CD4-positive, alpha-beta T cell (primary cell): ENCODE measurements at regions of chr12 and their contacts with region 1.

Region 1: GRCh38 chr12:50132505-50133135 is 20.6 kb downstream of the COX14 start:
- DNase-seq: peak in 3 of 14 experiments; percentile 61 to 70 (median 63)
- ATAC-seq: peak; percentile 65
- H3K4me3 ChIP-seq: no peak overlapping the region
- H3K4me3 Mint-ChIP-seq: no peak overlapping the region
- H3K27ac ChIP-seq: no peak overlapping the region
- H3K27ac Mint-ChIP-seq: peak overlapping the region; percentile 16
- H3K4me1 ChIP-seq: no peaks in the 10 kb centered on the region
- H3K4me1 Mint-ChIP-seq: peaks cover 16% of the 10 kb centered on the region
- H3K27me3 ChIP-seq: no peaks in the 10 kb centered on the region
- H3K27me3 Mint-ChIP-seq: no peaks in the 10 kb centered on the region
- CTCF ChIP-seq: peak; percentile 82

Region 2: DNA sequence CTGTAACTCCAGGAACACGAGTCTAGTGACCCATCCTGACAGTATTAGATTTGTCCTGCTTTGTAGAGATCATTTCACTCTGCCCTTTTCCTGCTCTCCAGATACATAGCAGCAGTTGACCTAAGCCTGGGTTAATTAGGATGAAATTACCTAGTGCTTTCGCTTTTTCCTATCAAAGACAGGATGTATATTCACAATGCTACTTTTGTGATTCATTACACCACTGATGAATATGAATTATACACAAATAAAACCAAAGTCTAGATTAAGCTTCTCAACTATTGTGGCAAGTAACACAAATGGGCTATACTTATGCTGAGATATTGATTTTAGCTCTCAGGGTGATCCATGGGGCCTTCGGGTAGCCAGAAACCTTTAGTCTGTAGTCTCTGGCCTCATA is 16.7 kb after region 1 on chr12:
- CTCF ChIA-PET with region 1: interaction called, 12 read pairs
- POLR2A ChIA-PET with region 1: interaction called, 3 read pairs
- intact Hi-C with region 1: no loop called
- DNase-seq: no peak
- ATAC-seq: no peak
- H3K4me3 ChIP-seq: no peak overlapping the region
- H3K4me3 Mint-ChIP-seq: no peak overlapping the region
- H3K27ac ChIP-seq: no peak overlapping the region
- H3K27ac Mint-ChIP-seq: peak overlapping the region; percentile 63
- H3K4me1 ChIP-seq: no peaks in the 10 kb centered on the region
- H3K4me1 Mint-ChIP-seq: peaks cover 31% of the 10 kb centered on the region
- H3K27me3 ChIP-seq: no peaks in the 10 kb centered on the region
- H3K27me3 Mint-ChIP-seq: no peaks in the 10 kb centered on the region
- CTCF ChIP-seq: no peak

Region 3: GRCh38 chr12:50174971-50175715 is 42.5 kb after region 1 on chr12:
- CTCF ChIA-PET with region 1: interaction called, 21 read pairs
- POLR2A ChIA-PET with region 1: interaction called, 5 read pairs
- intact Hi-C with region 1: loop called (anchors 1 kb)
- DNase-seq: peak in 5 of 14 experiments; percentile 8 to 81 (median 69)
- ATAC-seq: peak; percentile 57
- H3K4me3 ChIP-seq: no peak overlapping the region
- H3K4me3 Mint-ChIP-seq: no peak overlapping the region
- H3K27ac ChIP-seq: no peak overlapping the region
- H3K27ac Mint-ChIP-seq: no peak overlapping the region
- H3K4me1 ChIP-seq: no peaks in the 10 kb centered on the region
- H3K4me1 Mint-ChIP-seq: no peaks in the 10 kb centered on the region
- H3K27me3 ChIP-seq: no peaks in the 10 kb centered on the region
- H3K27me3 Mint-ChIP-seq: no peaks in the 10 kb centered on the region
- CTCF ChIP-seq: peak; percentile 90

Region 4: DNA sequence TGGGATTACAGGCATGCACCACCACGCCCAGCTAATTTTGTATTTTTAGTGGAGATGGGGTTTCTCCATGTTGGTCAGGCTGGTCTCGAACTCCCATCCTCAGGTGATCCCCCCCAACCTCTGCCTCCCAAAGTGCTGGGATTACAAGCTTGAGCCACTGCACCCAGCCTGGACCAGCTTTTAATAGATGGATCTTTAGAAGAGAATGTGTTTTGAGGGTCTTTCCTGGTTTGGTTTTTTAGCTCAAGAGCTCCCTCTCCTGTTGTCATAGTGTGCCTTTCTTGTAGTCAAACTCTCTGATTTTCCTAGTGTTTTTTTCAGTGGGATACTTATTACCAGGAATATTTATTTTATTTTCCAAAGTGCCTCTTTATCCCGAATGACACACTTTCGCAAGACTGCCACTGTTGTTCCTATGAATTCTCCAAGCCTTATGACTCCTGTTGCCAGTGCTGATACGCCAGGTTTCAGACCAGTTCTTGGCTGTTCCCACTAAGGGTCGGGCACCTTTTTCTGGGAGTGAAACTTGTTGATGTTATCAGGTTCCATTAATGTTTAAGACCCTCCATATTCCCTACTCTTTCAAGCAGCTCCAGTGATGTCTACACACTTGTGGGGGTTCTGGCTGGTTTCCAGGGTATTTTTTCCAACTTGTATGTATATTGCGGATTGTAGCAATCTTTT is 182.2 kb after region 1 on chr12:
- CTCF ChIA-PET with region 1: no interaction called
- POLR2A ChIA-PET with region 1: no interaction called
- intact Hi-C with region 1: loop called (anchors 5 to 10 kb)
- DNase-seq: peak in 3 of 14 experiments; percentile 11 to 18 (median 16)
- ATAC-seq: no peak
- H3K4me3 ChIP-seq: no peak overlapping the region
- H3K4me3 Mint-ChIP-seq: no peak overlapping the region
- H3K27ac ChIP-seq: no peak overlapping the region
- H3K27ac Mint-ChIP-seq: no peak overlapping the region
- H3K4me1 ChIP-seq: no peaks in the 10 kb centered on the region
- H3K4me1 Mint-ChIP-seq: no peaks in the 10 kb centered on the region
- H3K27me3 ChIP-seq: no peaks in the 10 kb centered on the region
- H3K27me3 Mint-ChIP-seq: no peaks in the 10 kb centered on the region
- CTCF ChIP-seq: peak; percentile 52